Activated T-helper 1 cell treated with anti-CD3 and anti-CD28 coated beads, Interleukin-12 subunit alpha, Interleukin-12 subunit beta, Interleukin-2, Interleukin-4 antibody, amounts not matched to agents 30 ng/mL and 10 ng/mL and 1 ng/mL, durations not matched to agents 14 hours and 24 hours and 36 hours (primary cell): ENCODE measurements at regions of chr18 and their contacts with region 1.

Region 1: DNA sequence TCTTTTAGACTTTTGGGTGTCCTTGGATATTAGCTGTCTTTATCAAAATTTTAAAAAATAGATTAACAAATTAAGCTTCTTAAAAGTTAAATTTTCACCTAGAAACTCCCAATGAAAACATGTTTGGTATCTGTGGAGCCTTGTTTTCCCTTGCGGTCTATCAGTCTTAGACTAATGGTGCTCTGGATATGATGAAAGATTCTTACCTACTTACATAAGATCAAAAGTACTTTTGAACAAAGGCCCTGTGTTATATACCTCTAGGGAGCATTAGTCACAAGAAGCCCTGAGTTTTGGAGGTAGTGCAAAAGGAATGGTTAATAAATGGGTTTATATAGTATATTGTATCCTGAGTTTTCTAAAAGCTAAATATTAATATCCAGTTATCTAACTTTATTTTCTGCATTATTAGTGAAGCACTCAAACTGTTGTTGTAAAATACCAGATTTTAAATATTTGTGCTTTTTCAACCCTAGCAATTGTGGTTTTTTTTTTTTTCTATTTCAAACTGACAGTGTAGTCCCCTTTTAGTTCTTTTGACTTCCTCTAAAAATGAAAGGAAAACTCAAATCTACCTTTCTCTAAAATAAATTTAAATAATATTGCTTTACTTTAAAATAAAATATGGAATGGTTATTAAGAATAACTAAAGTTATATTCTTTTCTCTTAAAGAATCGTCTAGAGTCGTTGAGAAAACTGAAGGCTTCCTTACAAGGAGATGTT is 18.1 kb downstream of the NDC80 start:
- DNase-seq: no peak
- H3K4me3 Mint-ChIP-seq: peak overlapping the region; percentile 63
- H3K27ac Mint-ChIP-seq: peak overlapping the region; percentile 77
- H3K4me1 Mint-ChIP-seq: peaks cover 58% of the 10 kb centered on the region
- H3K27me3 Mint-ChIP-seq: no peaks in the 10 kb centered on the region

Region 2: DNA sequence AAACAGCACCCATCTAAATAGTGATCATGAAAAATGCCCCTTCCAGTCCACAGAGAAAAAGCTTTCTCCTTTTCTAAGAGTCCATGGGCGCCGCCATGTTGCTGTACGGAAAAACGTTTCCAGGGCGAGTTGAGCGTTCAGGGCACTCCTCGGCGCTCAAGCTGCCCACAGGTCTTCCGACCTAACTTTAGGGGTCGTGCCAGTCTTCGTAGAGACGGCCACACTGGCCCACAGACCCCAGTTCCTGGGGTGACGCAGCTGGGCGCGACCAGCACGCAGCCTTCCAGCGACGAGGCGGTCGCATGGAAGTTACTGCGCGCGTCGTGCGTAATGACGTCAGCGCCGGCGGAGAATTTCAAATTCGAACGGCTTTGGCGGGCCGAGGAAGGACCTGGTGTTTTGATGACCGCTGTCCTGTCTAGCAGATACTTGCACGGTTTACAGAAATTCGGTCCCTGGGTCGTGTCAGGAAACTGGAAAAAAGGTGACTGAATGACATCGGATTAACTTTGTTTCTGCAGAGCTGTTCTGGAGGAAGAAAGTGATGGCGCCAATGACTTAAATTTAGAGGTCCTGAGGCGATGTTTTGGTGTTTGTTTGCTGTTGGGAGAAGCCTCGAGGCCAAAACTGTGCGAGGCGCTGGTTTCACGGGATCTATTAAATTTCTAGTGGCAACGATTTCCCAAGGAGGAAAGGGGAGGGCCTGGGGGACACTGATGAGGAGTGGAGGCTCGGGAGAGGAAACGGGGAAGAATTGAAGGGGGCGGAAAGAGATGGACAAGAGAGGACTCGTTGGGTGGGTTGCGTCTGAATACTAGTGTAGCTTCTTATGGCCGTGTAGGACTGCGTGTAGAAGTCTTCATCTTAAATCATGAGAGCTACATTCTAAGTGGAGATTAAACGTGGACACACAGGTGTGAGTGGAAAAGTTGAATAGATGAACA is 18.0 kb before region 1 on chr18 and contains the starts of genes METTL4 and NDC80:
- intact Hi-C with region 1: loop called (anchors 2 kb)
- DNase-seq: peak; percentile 79
- H3K4me3 Mint-ChIP-seq: peak within 1 kb of the TSS; percentile 97
- H3K27ac Mint-ChIP-seq: peak within 1 kb of the TSS; percentile 97
- H3K4me1 Mint-ChIP-seq: peaks cover 66% of the 10 kb centered on the region
- H3K27me3 Mint-ChIP-seq: no peaks in the 10 kb centered on the region
- total RNA-seq, gene METTL4: 15.0 and 26.2 TPM in 2 replicates
- total RNA-seq, gene NDC80: 41.2 and 42.6 TPM in 2 replicates